GM12878 (cell line): ENCODE measurements at regions of chr14 and their contacts with region 1.

Region 1: DNA sequence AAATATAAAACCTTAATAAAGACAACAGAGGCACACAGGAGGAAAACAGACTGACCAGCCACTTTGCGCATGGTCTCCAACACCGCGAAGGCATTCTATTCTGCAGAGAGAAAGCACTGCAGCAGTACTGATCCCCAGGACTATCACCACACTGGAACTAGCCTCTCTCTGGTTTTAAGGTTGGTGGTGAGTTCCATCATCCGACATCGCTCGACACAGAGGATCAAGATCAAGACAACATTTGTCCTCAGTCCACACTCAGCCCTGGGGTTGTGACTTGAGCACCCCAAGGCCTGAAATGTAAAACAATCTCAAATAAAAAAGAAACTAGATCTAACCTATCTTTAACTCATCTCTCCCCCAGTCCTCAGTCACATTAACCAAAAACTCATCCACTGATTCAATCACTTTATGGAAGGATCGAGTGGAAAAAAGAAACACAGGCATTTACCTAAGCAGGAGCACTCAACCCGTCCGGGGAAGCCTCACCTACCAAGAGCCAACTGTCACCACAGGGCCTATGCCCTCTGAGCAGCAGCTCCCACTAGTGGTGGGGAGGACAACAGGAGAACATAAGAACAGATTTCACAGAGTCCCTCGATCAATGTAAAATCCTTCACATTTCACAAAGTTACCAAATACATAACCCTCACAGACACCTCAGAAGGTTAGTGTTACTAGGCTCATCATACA is 17.7 kb downstream of the STXBP6 start:
- DNase-seq: no peak
- ATAC-seq: peak; percentile 93
- H3K4me3 ChIP-seq: no peak overlapping the region
- H3K27ac ChIP-seq: no peak overlapping the region
- H3K4me1 ChIP-seq: no peaks in the 10 kb centered on the region
- H3K27me3 ChIP-seq: no peaks in the 10 kb centered on the region
- CTCF ChIP-seq: peak; percentile 51 to 80 (median 66)
- EP300 ChIP-seq: no peak; a peak in 1 of 4 replicates
- POLR2A ChIP-seq: no peak
- RAD21 ChIP-seq: no peak

Region 2: GRCh38 chr14:23829736-23830502 is 1202.3 kb before region 1 on chr14:
- CTCF ChIA-PET with region 1: no interaction called
- POLR2A ChIA-PET with region 1: no interaction called
- RAD21 ChIA-PET with region 1: no interaction called
- SMC1A ChIA-PET with region 1: no interaction called
- in situ Hi-C with region 1: no loop called
- intact Hi-C with region 1: no loop called
- DNase-seq: no peak
- ATAC-seq: no peak
- H3K4me3 ChIP-seq: no peak overlapping the region
- H3K27ac ChIP-seq: no peak overlapping the region
- H3K4me1 ChIP-seq: no peaks in the 10 kb centered on the region
- H3K27me3 ChIP-seq: no peaks in the 10 kb centered on the region; a peak in 1 of 4 replicates
- CTCF ChIP-seq: no peak
- EP300 ChIP-seq: no peak
- POLR2A ChIP-seq: no peak
- RAD21 ChIP-seq: no peak

Region 3: DNA sequence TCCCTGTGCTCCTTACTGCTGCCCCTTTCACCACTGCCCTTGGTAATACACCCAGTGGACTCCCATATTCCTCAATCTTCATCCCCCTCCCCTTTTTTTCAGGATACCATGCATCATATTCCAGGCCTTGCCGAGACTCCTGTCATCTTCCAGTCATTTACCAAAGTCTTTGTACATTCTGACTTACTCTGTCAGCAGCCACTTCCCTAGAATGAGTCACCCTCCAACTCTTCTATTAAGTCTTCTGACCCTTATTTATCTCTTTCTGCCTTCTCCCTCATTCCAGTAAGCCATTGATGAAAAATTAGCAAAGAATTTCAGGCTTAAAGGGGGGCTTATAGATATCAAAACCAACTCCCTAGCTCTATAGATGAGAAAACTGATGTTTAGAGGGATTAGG is 110.3 kb before region 1 on chr14:
- CTCF ChIA-PET with region 1: interaction called, 10 read pairs
- POLR2A ChIA-PET with region 1: interaction called, 3 read pairs
- RAD21 ChIA-PET with region 1: interaction called, 6 read pairs
- SMC1A ChIA-PET with region 1: interaction called, 13 read pairs
- in situ Hi-C with region 1: no loop called
- intact Hi-C with region 1: no loop called
- DNase-seq: no peak
- ATAC-seq: peak; percentile 14; the same call in 1 of the 3 replicates
- H3K4me3 ChIP-seq: no peak overlapping the region
- H3K27ac ChIP-seq: no peak overlapping the region
- H3K4me1 ChIP-seq: no peaks in the 10 kb centered on the region
- H3K27me3 ChIP-seq: no peaks in the 10 kb centered on the region
- CTCF ChIP-seq: no peak
- EP300 ChIP-seq: no peak
- POLR2A ChIP-seq: no peak
- RAD21 ChIP-seq: no peak

Region 4: GRCh38 chr14:25014440-25014839 is 17.8 kb before region 1 on chr14:
- CTCF ChIA-PET with region 1: interaction called, 10 read pairs
- POLR2A ChIA-PET with region 1: interaction called, 8 read pairs
- RAD21 ChIA-PET with region 1: interaction called, 67 read pairs
- SMC1A ChIA-PET with region 1: interaction called, 172 read pairs
- in situ Hi-C with region 1: no loop called
- intact Hi-C with region 1: no loop called
- DNase-seq: no peak
- ATAC-seq: peak; percentile 37
- H3K4me3 ChIP-seq: no peak overlapping the region
- H3K27ac ChIP-seq: no peak overlapping the region
- H3K4me1 ChIP-seq: no peaks in the 10 kb centered on the region
- H3K27me3 ChIP-seq: no peaks in the 10 kb centered on the region
- CTCF ChIP-seq: no peak
- EP300 ChIP-seq: no peak
- POLR2A ChIP-seq: no peak
- RAD21 ChIP-seq: no peak

Region 5: DNA sequence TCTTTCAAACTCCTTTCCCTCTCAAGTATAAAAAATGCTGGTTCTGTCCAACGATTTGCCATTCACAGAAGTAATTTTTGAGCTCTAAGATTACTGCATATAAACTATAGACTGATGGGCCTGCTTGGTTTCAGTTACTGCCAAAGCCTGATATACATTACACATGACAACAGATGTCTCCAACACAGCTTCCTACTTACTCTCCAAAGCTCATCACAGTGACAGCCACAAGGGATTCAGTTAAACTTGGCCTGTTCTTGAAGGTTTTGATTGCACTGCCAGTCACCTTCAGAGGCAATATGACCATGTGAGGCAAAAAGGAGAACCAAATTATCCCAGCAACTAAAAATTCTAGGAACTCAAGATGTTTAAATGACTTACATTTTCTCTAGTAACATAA is 12.3 kb before region 1 on chr14:
- CTCF ChIA-PET with region 1: interaction called, 10 read pairs
- POLR2A ChIA-PET with region 1: interaction called, 4 read pairs
- RAD21 ChIA-PET with region 1: interaction called, 67 read pairs
- SMC1A ChIA-PET with region 1: interaction called, 172 read pairs
- in situ Hi-C with region 1: no loop called
- intact Hi-C with region 1: no loop called
- DNase-seq: no peak
- ATAC-seq: peak; percentile 45
- H3K4me3 ChIP-seq: no peak overlapping the region
- H3K27ac ChIP-seq: no peak overlapping the region
- H3K4me1 ChIP-seq: no peaks in the 10 kb centered on the region
- H3K27me3 ChIP-seq: no peaks in the 10 kb centered on the region
- CTCF ChIP-seq: no peak
- EP300 ChIP-seq: no peak
- POLR2A ChIP-seq: no peak
- RAD21 ChIP-seq: no peak

Region 6: DNA sequence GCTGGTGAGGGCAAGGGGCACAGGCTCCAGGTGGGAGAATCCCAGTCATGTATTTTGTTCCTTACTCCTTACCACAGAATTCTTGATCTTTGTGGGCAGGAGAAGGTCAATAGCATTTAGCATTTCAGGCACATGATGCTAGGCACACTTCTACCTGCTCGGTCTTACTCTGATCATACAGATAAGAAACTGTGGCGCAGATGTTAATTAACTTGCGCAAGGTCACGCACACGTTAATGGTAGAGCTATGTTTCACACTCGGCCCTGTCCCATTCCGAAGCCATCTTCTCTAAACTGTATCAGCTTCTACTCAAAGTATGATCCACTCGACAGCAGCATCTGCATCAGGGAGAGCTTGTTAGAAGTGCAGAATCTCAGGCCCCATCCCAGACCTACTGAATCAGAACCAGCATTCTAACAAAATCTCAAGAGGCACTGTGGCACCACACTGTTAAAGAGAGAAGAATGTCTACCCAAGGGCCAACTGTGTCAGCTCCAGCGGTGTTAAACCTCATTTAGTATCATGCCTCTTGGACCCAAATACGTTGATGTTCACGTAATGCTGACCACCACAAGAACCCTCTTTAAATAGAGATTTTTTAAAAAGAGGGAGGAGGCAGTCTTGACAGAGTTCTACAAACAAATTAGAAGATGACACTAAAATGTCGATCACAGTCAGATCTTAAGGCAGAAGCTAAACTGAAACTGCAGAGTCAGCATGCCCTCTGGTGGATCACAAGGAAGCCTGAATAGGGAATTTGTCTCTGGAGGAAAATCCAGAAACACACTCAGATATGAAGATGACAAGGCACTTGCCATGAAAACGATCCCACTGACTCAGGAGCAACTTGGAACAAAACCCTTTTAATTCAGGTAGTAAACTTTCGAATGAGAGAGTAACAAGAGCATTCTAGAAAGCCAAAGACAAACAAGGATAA is 10.4 kb after region 1 on chr14:
- CTCF ChIA-PET with region 1: interaction called, 10 read pairs
- POLR2A ChIA-PET with region 1: interaction called, 3 read pairs
- RAD21 ChIA-PET with region 1: interaction called, 5 read pairs
- SMC1A ChIA-PET with region 1: interaction called, 7 read pairs
- in situ Hi-C with region 1: no loop called
- intact Hi-C with region 1: no loop called
- DNase-seq: no peak
- ATAC-seq: no peak
- H3K4me3 ChIP-seq: no peak overlapping the region
- H3K27ac ChIP-seq: no peak overlapping the region
- H3K4me1 ChIP-seq: no peaks in the 10 kb centered on the region
- H3K27me3 ChIP-seq: no peaks in the 10 kb centered on the region
- CTCF ChIP-seq: 0 out of 6 replicates have a peak, but pooled peaks of 1 of the 3 experiments have one; percentile 8
- EP300 ChIP-seq: no peak
- POLR2A ChIP-seq: no peak
- RAD21 ChIP-seq: no peak

Region 7: GRCh38 chr14:25069879-25070278 is 37.6 kb after region 1 on chr14:
- CTCF ChIA-PET with region 1: no interaction called
- POLR2A ChIA-PET with region 1: no interaction called
- RAD21 ChIA-PET with region 1: no interaction called
- SMC1A ChIA-PET with region 1: no interaction called
- in situ Hi-C with region 1: no loop called
- intact Hi-C with region 1: no loop called
- DNase-seq: no peak
- ATAC-seq: no peak
- H3K4me3 ChIP-seq: no peak overlapping the region
- H3K27ac ChIP-seq: no peak overlapping the region
- H3K4me1 ChIP-seq: no peaks in the 10 kb centered on the region
- H3K27me3 ChIP-seq: no peaks in the 10 kb centered on the region
- CTCF ChIP-seq: no peak
- EP300 ChIP-seq: no peak
- POLR2A ChIP-seq: no peak
- RAD21 ChIP-seq: no peak